ENCODE measurements at regions of chr9 and their contacts with region 1.

Region 1: GRCh38 chr9:113520109-113520642 is 56.6 kb downstream of the RGS3 start:
- DNase-seq: no peak

Region 2: GRCh38 chr9:113548221-113549041 is 28.3 kb after region 1 on chr9:
- intact Hi-C with region 1: loop called in 1 of 2 experiments (anchors 1 kb)
- DNase-seq: peak; percentile 92

Region 3: GRCh38 chr9:113853324-113853723 is 333.1 kb after region 1 on chr9:
- intact Hi-C with region 1: no loop called
- DNase-seq: no peak